CD8-positive, alpha-beta T cell (primary cell): ENCODE measurements at regions of chr19 and their contacts with region 1.

Region 1: DNA sequence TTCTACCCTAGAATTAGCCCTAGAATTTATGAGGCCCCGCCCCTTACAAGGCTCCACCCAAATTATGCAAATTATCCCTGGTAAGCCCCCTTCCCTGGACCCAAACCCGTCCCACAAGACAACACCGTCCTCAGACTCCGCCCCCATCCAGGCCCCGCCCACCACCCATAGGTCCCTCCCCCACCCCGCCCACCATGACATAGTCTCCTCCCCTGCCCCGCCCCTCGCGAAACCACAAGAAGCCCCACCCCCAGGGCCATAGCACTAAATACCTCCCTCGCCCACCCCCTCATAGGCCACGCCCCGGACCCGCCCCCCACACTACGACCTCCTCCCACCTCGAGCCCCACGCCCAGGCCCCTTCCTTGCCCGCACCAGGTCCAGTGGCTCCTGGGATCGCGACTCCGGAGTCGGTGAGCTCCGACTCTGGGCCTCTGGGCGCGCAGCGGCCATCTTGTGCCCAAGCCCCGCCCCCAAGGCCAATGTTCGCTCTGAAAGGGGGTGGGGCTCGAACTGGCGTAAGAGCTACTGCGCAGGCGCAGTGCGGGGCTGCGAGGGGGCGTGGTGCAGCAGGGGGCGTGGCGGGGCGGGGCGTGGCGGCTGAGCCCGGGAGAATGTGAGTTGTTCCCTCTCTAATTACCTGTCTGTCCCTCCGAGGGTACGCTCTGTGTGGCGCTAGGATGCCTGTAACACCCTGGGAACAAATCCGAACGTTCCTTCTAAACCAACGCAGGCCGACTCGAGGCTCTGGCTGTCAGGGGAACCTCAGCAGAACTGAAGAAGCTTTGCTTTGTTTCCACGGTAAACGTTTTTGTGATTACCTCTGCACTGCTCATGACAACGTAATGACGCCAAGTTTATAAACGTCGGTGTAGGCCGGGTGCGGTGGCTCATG is at the start of gene ZNF784:
- DNase-seq: peak; percentile 87 to 97 (median 93)
- ATAC-seq: peak; percentile 76
- H3K4me3 ChIP-seq: peak within 1 kb of the TSS; percentile 67 to 88
- H3K4me3 Mint-ChIP-seq: peak within 1 kb of the TSS; percentile 91
- H3K27ac ChIP-seq: peak within 1 kb of the TSS; percentile 72 to 92
- H3K27ac Mint-ChIP-seq: peak within 1 kb of the TSS; percentile 98
- H3K4me1 ChIP-seq: peaks cover 50% of the 10 kb centered on the region
- H3K4me1 Mint-ChIP-seq: peaks cover 56% of the 10 kb centered on the region
- H3K27me3 ChIP-seq: no peaks in the 10 kb centered on the region
- H3K27me3 Mint-ChIP-seq: no peaks in the 10 kb centered on the region
- CTCF ChIP-seq: no peak
- total RNA-seq, gene ZNF784: 11.7 to 12.2 TPM

Region 2: DNA sequence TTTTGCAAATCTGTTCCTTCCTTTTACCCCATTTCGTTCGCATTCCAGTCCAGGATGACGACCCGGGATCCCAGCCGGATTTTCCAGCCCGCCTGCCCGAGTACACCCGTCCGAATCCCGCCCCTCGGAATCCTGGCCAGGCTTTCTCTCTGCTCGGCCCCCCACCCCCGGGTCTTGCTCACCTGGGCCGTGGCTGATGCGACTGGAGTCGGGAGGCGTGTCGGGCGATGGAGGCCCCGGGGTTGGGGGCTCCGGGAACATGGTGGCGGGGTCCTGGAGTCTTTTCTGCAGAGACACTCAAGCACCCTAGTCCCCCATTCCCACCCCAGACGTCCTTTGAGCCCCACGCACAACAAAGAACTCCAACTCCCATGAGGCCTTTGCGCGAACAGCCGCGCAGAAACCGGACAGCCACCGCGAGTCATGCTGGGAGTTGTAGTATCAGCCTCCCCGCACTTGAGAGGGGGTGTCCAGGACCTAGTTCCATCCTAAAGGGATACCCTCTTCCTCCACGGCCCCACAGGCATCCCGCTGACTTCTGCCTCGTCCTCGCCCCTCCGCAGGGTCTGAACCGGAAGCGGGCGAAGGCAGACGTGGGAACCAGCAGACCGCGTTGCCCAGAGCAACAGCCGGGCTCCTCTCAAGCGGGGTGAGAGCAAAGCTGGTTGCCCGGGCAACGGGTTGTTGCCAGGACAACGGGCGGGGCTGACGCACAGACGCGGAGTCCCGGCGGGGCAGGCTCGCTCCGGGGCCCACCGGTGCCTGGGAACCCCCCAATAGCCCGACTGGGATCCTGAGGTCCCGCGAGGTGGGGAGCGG is 445.4 kb before region 1 on chr19:
- CTCF ChIA-PET with region 1: no interaction called
- POLR2A ChIA-PET with region 1: no interaction called
- intact Hi-C with region 1: loop called in 1 of 2 experiments (anchors 1 kb)
- DNase-seq: peak; percentile 87 to 99 (median 96)
- ATAC-seq: peak; percentile 79
- H3K4me3 ChIP-seq: peak overlapping the region; percentile 39 to 44
- H3K4me3 Mint-ChIP-seq: peak overlapping the region; percentile 75
- H3K27ac ChIP-seq: peak overlapping the region; percentile 45 to 61
- H3K27ac Mint-ChIP-seq: peak overlapping the region; percentile 79
- H3K4me1 ChIP-seq: peaks cover 27% of the 10 kb centered on the region
- H3K4me1 Mint-ChIP-seq: peaks cover 23% of the 10 kb centered on the region
- H3K27me3 ChIP-seq: peaks cover 43 to 67% of the 10 kb centered on the region in 2 experiments
- H3K27me3 Mint-ChIP-seq: peaks cover 68% of the 10 kb centered on the region
- CTCF ChIP-seq: no peak

Region 3: DNA sequence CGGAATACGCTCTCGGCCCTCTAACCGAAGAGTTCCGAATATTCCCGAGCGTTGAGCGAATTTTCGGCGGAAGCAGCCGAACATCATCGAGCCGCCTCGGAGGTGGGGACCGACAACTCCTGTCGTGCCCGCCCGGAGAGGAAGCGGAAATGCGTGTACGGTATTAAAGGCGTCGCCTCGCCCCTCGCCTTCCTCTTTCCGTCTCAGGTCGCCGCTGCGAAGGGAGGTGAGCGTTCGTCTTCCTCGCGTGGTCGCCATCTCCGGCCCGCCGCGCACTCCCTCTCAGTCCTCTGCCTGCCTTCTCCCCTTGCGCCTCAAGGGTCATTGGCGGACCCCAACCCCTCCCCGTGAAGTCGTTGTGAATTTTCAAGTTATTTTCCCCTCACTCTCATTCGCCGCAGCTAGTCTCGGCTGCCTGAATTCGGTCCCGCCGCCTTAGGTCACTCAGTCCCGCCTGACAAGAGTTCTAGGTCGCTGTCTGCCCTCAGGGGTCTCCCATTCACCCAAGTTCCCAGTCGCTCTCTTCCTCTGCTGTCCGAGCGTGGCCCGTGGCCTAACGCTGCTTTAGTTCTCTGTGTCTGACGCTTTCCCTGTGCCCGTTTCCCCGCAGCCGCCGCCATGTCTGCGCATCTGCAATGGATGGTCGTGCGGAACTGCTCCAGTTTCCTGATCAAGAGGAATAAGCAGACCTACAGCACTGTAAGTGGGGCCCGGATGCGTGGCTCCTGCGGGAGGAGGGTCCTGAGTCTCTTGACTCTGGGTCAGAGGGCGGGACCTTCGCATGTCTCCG is 238.4 kb before region 1 on chr19 and contains the start of gene RPL28:
- CTCF ChIA-PET with region 1: no interaction called
- POLR2A ChIA-PET with region 1: no interaction called
- intact Hi-C with region 1: loop called in 1 of 2 experiments (anchors 2 kb)
- DNase-seq: peak; percentile 97 to 99 (median 99)
- ATAC-seq: peak; percentile 80
- H3K4me3 ChIP-seq: peak within 1 kb of the TSS; percentile 75 to 94
- H3K4me3 Mint-ChIP-seq: peak within 1 kb of the TSS; percentile 100
- H3K27ac ChIP-seq: peak within 1 kb of the TSS; percentile 95 to 97
- H3K27ac Mint-ChIP-seq: peak within 1 kb of the TSS; percentile 100
- H3K4me1 ChIP-seq: peaks cover 59% of the 10 kb centered on the region
- H3K4me1 Mint-ChIP-seq: peaks cover 75% of the 10 kb centered on the region
- H3K27me3 ChIP-seq: no peaks in the 10 kb centered on the region
- H3K27me3 Mint-ChIP-seq: no peaks in the 10 kb centered on the region
- CTCF ChIP-seq: no peak
- total RNA-seq, gene RPL28: 4,227 to 4,270 TPM

Region 4: GRCh38 chr19:55476100-55476775 is 148.1 kb before region 1 on chr19 and contains the start of gene ZNF628:
- CTCF ChIA-PET with region 1: no interaction called
- POLR2A ChIA-PET with region 1: interaction called, 9 read pairs
- intact Hi-C with region 1: loop called in 1 of 2 experiments (anchors 5 kb)
- DNase-seq: peak; percentile 95 to 99 (median 98)
- ATAC-seq: peak; percentile 93
- H3K4me3 ChIP-seq: peak within 1 kb of the TSS; percentile 70 to 72
- H3K4me3 Mint-ChIP-seq: peak within 1 kb of the TSS; percentile 85
- H3K27ac ChIP-seq: peak within 1 kb of the TSS; percentile 58 to 91
- H3K27ac Mint-ChIP-seq: peak within 1 kb of the TSS; percentile 88
- H3K4me1 ChIP-seq: peaks cover 17% of the 10 kb centered on the region
- H3K4me1 Mint-ChIP-seq: peaks cover 34% of the 10 kb centered on the region
- H3K27me3 ChIP-seq: no peaks in the 10 kb centered on the region
- H3K27me3 Mint-ChIP-seq: no peaks in the 10 kb centered on the region
- CTCF ChIP-seq: no peak
- total RNA-seq, gene ZNF628: 27.0 to 27.8 TPM

Region 5: DNA sequence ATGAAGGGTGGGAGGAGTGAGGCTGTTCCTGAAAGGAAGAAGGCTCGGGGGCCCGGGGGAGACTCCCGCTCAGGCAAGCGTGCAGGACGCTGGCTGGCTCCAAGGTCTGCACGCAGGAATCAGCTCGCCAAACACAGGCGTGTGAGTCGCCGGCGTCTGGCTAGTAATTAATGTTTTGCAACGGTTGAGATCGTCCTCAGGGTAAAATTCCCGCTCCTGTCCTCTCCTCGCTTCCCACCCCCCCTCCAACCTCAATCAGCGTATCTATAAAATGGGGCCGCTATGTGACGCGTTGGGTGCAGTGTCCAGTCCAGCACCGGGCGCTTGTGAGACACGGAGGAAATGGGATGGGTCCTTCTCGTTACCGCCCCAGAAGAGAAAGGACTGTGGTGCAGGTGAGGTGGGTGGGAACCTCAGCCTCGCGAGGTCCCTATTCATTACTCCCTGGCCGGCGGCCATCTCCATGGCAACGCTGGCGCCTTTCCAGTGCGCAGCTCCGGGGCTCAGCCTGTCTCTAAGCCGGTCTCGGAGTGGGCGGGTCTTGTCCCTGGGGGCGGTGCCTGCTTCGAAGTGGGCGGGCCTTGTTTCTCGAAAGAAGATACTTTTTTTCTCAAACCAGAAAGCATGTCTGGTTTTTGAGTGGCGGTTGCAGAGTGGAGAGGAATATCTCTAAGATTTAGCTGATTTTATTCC is 37.2 kb before region 1 on chr19:
- CTCF ChIA-PET with region 1: no interaction called
- POLR2A ChIA-PET with region 1: interaction called, 3 read pairs
- intact Hi-C with region 1: loop called (anchors 1 kb)
- DNase-seq: peak; percentile 86 to 95 (median 92)
- ATAC-seq: peak; percentile 96
- H3K4me3 ChIP-seq: peak overlapping the region; percentile 32 to 55
- H3K4me3 Mint-ChIP-seq: peak overlapping the region; percentile 88
- H3K27ac ChIP-seq: peak overlapping the region in 1 of 2 experiments; percentile 24
- H3K27ac Mint-ChIP-seq: peak overlapping the region; percentile 45
- H3K4me1 ChIP-seq: peaks cover 25% of the 10 kb centered on the region
- H3K4me1 Mint-ChIP-seq: peaks cover 30% of the 10 kb centered on the region
- H3K27me3 ChIP-seq: no peaks in the 10 kb centered on the region
- H3K27me3 Mint-ChIP-seq: no peaks in the 10 kb centered on the region
- CTCF ChIP-seq: no peak